Caco-2 (cell line): ENCODE measurements at regions of chr3 and their contacts with region 1.

Region 1: DNA sequence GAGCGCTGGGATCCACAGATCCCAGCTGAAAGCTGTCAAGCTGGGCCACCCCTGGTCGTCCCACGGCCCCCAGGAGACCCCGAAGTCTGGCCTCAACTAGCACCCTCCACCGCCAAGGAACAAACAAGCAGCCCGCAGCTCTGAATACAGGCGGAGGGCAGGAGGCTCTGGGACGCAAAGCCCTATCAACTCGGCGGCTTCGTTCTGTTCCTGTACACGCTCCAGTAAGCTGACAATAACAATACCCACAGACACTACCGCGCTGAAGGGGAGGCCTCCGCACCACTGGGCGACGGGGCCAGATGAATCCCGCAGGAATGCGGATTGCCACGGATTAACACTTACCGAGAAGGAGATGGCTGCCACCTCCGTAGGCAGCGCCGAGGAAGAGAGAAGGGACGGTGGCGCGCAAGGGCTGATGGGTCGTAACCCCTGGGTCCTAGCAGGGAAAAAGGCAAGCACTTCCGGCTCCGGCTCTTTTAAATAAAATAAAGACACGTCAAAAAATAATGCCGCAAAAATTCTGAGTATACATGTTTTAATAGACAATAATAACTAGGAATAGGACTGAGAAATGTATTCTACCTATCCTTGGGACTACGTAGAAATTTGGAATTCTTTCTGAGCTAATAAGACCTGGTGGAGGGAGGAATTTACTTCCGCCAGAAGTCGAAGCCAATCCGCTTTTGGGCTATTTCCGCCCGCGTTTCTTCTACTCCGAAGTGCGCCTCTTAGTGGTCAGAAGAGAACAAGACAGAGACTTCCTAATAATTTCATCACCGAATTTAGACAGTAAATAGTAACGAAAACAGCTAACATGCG is at the start of gene RPL32:
- DNase-seq: peak; percentile 87 to 89
- H3K4me3 ChIP-seq: peak within 1 kb of the TSS; percentile 84
- H3K4me3 Mint-ChIP-seq: peak within 1 kb of the TSS; percentile 93
- H3K27ac Mint-ChIP-seq: peak within 1 kb of the TSS; percentile 100
- H3K4me1 ChIP-seq: peaks cover 9% of the 10 kb centered on the region
- H3K4me1 Mint-ChIP-seq: no peaks in the 10 kb centered on the region
- H3K27me3 ChIP-seq: no peaks in the 10 kb centered on the region
- H3K27me3 Mint-ChIP-seq: no peaks in the 10 kb centered on the region
- CTCF ChIP-seq: peak; percentile 62 to 72
- total RNA-seq, gene RPL32: 1,713 and 1,899 TPM in 2 replicates

Region 2: GRCh38 chr3:12714278-12714677 is 127.1 kb before region 1 on chr3:
- CTCF ChIA-PET with region 1: no interaction called
- POLR2A ChIA-PET with region 1: no interaction called
- intact Hi-C with region 1: no loop called
- DNase-seq: no peak
- H3K4me3 ChIP-seq: no peak overlapping the region
- H3K4me3 Mint-ChIP-seq: no peak overlapping the region
- H3K27ac Mint-ChIP-seq: no peak overlapping the region
- H3K4me1 ChIP-seq: no peaks in the 10 kb centered on the region; the same call in 1 of the 2 replicates
- H3K4me1 Mint-ChIP-seq: peaks cover 8% of the 10 kb centered on the region
- H3K27me3 ChIP-seq: no peaks in the 10 kb centered on the region
- H3K27me3 Mint-ChIP-seq: no peaks in the 10 kb centered on the region
- CTCF ChIP-seq: no peak

Region 3: GRCh38 chr3:12799525-12800440 is 41.6 kb before region 1 on chr3:
- CTCF ChIA-PET with region 1: no interaction called
- POLR2A ChIA-PET with region 1: no interaction called
- intact Hi-C with region 1: no loop called
- DNase-seq: no peak
- H3K4me3 ChIP-seq: no peak overlapping the region
- H3K4me3 Mint-ChIP-seq: no peak overlapping the region
- H3K27ac Mint-ChIP-seq: no peak overlapping the region
- H3K4me1 ChIP-seq: no peaks in the 10 kb centered on the region
- H3K4me1 Mint-ChIP-seq: no peaks in the 10 kb centered on the region
- H3K27me3 ChIP-seq: no peaks in the 10 kb centered on the region
- H3K27me3 Mint-ChIP-seq: peaks cover 2% of the 10 kb centered on the region
- CTCF ChIP-seq: no peak

Region 4: DNA sequence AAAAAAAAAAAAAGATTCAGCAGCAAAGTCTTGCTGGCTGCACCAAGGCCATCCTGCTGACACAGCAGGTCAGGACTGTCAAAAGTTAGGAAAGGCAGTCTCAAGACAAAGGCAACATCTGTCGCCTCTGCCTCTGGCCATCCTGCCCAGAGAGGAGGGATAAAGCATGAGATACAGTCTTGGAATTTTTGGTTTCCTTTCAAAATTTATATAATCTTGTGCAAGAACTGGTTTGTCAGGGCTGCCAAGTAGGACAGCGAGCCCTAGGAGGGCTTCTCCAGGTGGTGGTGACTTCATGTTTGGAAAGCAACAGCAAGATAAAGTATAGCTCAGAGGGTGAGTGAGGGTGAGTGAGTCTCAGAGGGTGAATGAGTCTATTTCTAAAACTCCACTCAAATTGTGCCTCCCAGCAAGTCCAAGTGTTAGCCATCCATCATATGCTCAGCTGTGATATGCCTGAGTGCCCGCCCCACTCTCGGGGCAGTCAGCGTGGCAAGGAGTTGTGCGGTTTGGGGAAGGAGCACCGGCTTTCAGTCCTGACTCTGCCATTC is 11.9 kb after region 1 on chr3:
- CTCF ChIA-PET with region 1: no interaction called
- POLR2A ChIA-PET with region 1: no interaction called
- intact Hi-C with region 1: loop called (anchors 1 kb)
- DNase-seq: no peak
- H3K4me3 ChIP-seq: no peak overlapping the region
- H3K4me3 Mint-ChIP-seq: no peak overlapping the region
- H3K27ac Mint-ChIP-seq: no peak overlapping the region
- H3K4me1 ChIP-seq: no peaks in the 10 kb centered on the region
- H3K4me1 Mint-ChIP-seq: no peaks in the 10 kb centered on the region
- H3K27me3 ChIP-seq: no peaks in the 10 kb centered on the region
- H3K27me3 Mint-ChIP-seq: peaks cover 4% of the 10 kb centered on the region
- CTCF ChIP-seq: no peak

Region 5: GRCh38 chr3:13186435-13186815 is 345.1 kb after region 1 on chr3:
- CTCF ChIA-PET with region 1: no interaction called
- POLR2A ChIA-PET with region 1: no interaction called
- intact Hi-C with region 1: no loop called
- DNase-seq: no peak
- H3K4me3 ChIP-seq: no peak overlapping the region
- H3K4me3 Mint-ChIP-seq: no peak overlapping the region
- H3K27ac Mint-ChIP-seq: no peak overlapping the region
- H3K4me1 ChIP-seq: no peaks in the 10 kb centered on the region
- H3K4me1 Mint-ChIP-seq: no peaks in the 10 kb centered on the region
- H3K27me3 ChIP-seq: 0 out of 2 replicates have a peak, but pooled peaks cover 1% of the 10 kb centered on the region
- H3K27me3 Mint-ChIP-seq: peaks cover 8% of the 10 kb centered on the region
- CTCF ChIP-seq: no peak